ENCODE measurements at regions of chr5 and their contacts with region 1.

Region 1: DNA sequence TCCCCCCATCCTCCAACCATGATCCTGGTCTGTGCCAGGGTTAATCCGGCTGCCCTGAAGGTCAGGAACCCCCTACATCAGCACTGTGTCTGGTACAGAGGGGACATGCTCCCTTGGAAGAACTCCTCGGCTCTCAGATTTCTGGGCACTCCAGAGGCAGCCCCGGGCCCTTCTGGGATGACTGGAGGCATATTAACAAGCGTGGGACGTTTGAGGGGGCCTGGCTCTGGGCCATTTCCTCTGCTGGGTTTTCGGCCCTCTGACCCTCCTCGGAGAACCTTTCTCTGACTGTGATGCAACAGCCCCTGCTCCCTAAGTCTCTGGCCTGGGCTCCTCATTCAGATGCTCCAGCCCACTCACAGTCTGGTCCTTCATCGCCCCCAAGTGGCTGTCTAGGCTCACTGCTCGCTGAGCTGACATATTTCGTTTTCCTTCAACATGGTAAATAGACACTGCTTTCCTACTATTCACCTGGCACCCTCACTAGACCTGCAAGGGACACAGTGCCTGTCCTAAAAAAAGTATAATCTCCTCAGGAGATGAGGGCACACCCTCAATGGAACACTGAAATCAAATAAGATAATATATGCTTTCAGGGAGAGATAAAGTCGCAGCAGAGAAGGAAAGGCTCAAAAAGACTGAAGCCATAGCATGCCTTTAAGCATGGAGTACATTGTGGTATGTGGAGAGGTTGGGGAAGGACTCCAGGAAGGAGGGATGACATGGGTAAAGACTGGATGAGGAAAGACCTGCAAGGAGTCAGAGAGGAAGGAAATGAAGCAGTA is 404.7 kb upstream of the TRPC7 start:
- DNase-seq: peak; percentile 48
- ATAC-seq: peak; percentile 96
- H3K4me3 ChIP-seq: no peak overlapping the region
- H3K27ac ChIP-seq: no peak overlapping the region
- H3K4me1 ChIP-seq: no peaks in the 10 kb centered on the region
- H3K27me3 ChIP-seq: peaks cover 0 to 1% of the 10 kb centered on the region in 2 experiments; a peak in 2 of 5 replicates
- CTCF ChIP-seq: peak; percentile 84
- EP300 ChIP-seq: no peak
- POLR2A ChIP-seq: no peak
- RAD21 ChIP-seq: peak; percentile 42; the same call in 1 of the 2 replicates

Region 2: DNA sequence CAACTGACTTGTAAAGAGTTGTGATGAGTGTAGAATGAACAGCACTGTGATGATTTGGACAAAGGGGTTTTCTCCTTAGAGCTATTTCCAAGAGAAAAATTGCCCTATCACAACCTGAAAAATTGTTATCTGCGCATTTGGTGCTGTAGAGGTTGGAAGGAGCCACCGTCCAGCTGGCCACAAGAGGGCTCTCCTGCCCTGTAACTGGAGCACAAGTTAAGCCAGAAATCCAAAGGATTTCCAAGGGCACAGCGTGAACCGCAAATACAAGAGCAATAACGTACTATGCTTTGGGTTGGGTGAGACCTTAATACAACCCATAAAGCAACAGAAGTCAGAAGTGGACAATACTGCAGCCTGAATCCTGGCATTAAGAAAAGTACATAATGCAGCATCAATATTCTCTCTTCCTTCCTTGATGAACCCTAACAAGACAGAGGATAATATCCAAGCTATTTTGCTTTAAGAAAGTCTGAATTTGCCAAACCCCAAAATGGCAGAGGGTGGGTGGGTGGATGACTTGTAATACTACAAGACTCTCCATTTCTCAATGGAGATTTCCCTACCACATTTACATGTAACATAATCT is 520.3 kb before region 1 on chr5:
- CTCF ChIA-PET with region 1: interaction called, 10 read pairs
- POLR2A ChIA-PET with region 1: no interaction called
- in situ Hi-C with region 1: loop called (anchors 5 kb)
- intact Hi-C with region 1: loop called (anchors 1 kb)
- DNase-seq: peak; percentile 47
- ATAC-seq: peak; percentile 95
- H3K4me3 ChIP-seq: no peak overlapping the region
- H3K27ac ChIP-seq: no peak overlapping the region
- H3K4me1 ChIP-seq: no peaks in the 10 kb centered on the region
- H3K27me3 ChIP-seq: peaks cover 0 to 12% of the 10 kb centered on the region in 2 experiments; a peak in 1 of 5 replicates
- CTCF ChIP-seq: peak; percentile 90
- EP300 ChIP-seq: no peak
- POLR2A ChIP-seq: no peak
- RAD21 ChIP-seq: peak; percentile 72

Region 3: DNA sequence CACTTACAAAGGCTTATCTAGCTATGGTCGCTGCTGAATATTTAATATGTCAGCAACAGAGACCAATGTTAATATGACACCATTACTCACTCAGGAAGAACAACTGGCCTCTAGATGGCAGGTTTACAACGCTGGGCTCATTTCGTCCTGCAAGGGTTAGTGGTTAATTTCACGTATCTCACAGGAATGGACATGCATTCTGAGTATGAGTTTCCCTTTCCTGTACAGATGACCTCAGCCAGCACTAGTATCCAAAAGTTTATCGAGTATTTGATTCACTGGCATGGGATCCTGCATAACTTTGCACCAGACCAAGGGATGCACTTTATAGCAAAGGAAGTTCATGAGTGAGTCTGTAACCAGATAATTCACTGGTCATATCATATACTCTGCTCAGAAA is 396.1 kb before region 1 on chr5:
- CTCF ChIA-PET with region 1: no interaction called
- POLR2A ChIA-PET with region 1: no interaction called
- in situ Hi-C with region 1: loop called (anchors 25 kb)
- intact Hi-C with region 1: loop called (anchors 5 kb)
- DNase-seq: peak; percentile 13
- ATAC-seq: peak; percentile 60
- H3K4me3 ChIP-seq: no peak overlapping the region
- H3K27ac ChIP-seq: no peak overlapping the region
- H3K4me1 ChIP-seq: no peaks in the 10 kb centered on the region
- H3K27me3 ChIP-seq: no peaks in the 10 kb centered on the region
- CTCF ChIP-seq: peak; percentile 31
- EP300 ChIP-seq: no peak
- POLR2A ChIP-seq: no peak
- RAD21 ChIP-seq: no peak

Region 4: GRCh38 chr5:136638077-136638476 is 132.0 kb before region 1 on chr5:
- CTCF ChIA-PET with region 1: no interaction called
- POLR2A ChIA-PET with region 1: no interaction called
- in situ Hi-C with region 1: no loop called
- intact Hi-C with region 1: loop called (anchors 1 kb)
- DNase-seq: no peak
- ATAC-seq: peak; percentile 47; the same call in 2 of the 3 replicates
- H3K4me3 ChIP-seq: no peak overlapping the region
- H3K27ac ChIP-seq: no peak overlapping the region
- H3K4me1 ChIP-seq: no peaks in the 10 kb centered on the region
- H3K27me3 ChIP-seq: peaks cover 0 to 3% of the 10 kb centered on the region in 2 experiments; a peak in 1 of 5 replicates
- CTCF ChIP-seq: no peak
- EP300 ChIP-seq: no peak
- POLR2A ChIP-seq: no peak
- RAD21 ChIP-seq: no peak

Region 5: GRCh38 chr5:136793300-136793699 is 23.2 kb after region 1 on chr5:
- CTCF ChIA-PET with region 1: no interaction called
- POLR2A ChIA-PET with region 1: no interaction called
- in situ Hi-C with region 1: no loop called
- intact Hi-C with region 1: no loop called
- DNase-seq: no peak
- ATAC-seq: no peak
- H3K4me3 ChIP-seq: no peak overlapping the region
- H3K27ac ChIP-seq: no peak overlapping the region
- H3K4me1 ChIP-seq: no peaks in the 10 kb centered on the region
- H3K27me3 ChIP-seq: peaks cover 0 to 1% of the 10 kb centered on the region in 2 experiments; a peak in 1 of 5 replicates
- CTCF ChIP-seq: no peak
- EP300 ChIP-seq: no peak
- POLR2A ChIP-seq: no peak
- RAD21 ChIP-seq: no peak